ENCODE measurements at regions of chr4 and their contacts with region 1.

Region 1: GRCh38 chr4:113394730-113395530 is 345.5 kb downstream of the ANK2 start:
- DNase-seq: peak; percentile 82
- ATAC-seq: peak; percentile 97
- H3K4me3 ChIP-seq: no peak overlapping the region
- H3K27ac ChIP-seq: no peak overlapping the region
- H3K4me1 ChIP-seq: peaks cover 4 to 20% of the 10 kb centered on the region in 2 experiments; a peak in 2 of 4 replicates
- H3K27me3 ChIP-seq: no peaks in the 10 kb centered on the region
- CTCF ChIP-seq: peak; percentile 56 to 86 (median 79)
- POLR2A ChIP-seq: no peak
- RAD21 ChIP-seq: peak; percentile 97

Region 2: GRCh38 chr4:112726031-112726430 is 668.9 kb before region 1 on chr4:
- CTCF ChIA-PET with region 1: no interaction called
- POLR2A ChIA-PET with region 1: no interaction called
- RAD21 ChIA-PET with region 1: no interaction called
- intact Hi-C with region 1: no loop called
- DNase-seq: no peak
- ATAC-seq: no peak
- H3K4me3 ChIP-seq: no peak overlapping the region
- H3K27ac ChIP-seq: no peak overlapping the region
- H3K4me1 ChIP-seq: peaks cover 0 to 5% of the 10 kb centered on the region in 2 experiments; a peak in 1 of 4 replicates
- H3K27me3 ChIP-seq: no peaks in the 10 kb centered on the region
- CTCF ChIP-seq: no peak
- POLR2A ChIP-seq: no peak
- RAD21 ChIP-seq: no peak

Region 3: GRCh38 chr4:113547487-113548042 is 152.6 kb after region 1 on chr4:
- CTCF ChIA-PET with region 1: interaction called, 3 read pairs
- POLR2A ChIA-PET with region 1: no interaction called
- RAD21 ChIA-PET with region 1: interaction called in 1 of 2 experiments, 7 read pairs
- intact Hi-C with region 1: loop called (anchors 5 kb)
- DNase-seq: peak; percentile 95
- ATAC-seq: peak; percentile 100
- H3K4me3 ChIP-seq: no peak overlapping the region
- H3K27ac ChIP-seq: no peak overlapping the region
- H3K4me1 ChIP-seq: peaks cover 6 to 13% of the 10 kb centered on the region in 2 experiments; a peak in 3 of 4 replicates
- H3K27me3 ChIP-seq: no peaks in the 10 kb centered on the region
- CTCF ChIP-seq: peak; percentile 81 to 98 (median 96)
- POLR2A ChIP-seq: no peak
- RAD21 ChIP-seq: peak; percentile 85

Region 4: GRCh38 chr4:113849771-113850170 is 454.8 kb after region 1 on chr4:
- CTCF ChIA-PET with region 1: no interaction called
- POLR2A ChIA-PET with region 1: no interaction called
- RAD21 ChIA-PET with region 1: no interaction called
- intact Hi-C with region 1: no loop called
- DNase-seq: no peak
- ATAC-seq: no peak
- H3K4me3 ChIP-seq: no peak overlapping the region
- H3K27ac ChIP-seq: no peak overlapping the region
- H3K4me1 ChIP-seq: no peaks in the 10 kb centered on the region
- H3K27me3 ChIP-seq: no peaks in the 10 kb centered on the region
- CTCF ChIP-seq: no peak
- POLR2A ChIP-seq: no peak
- RAD21 ChIP-seq: no peak

Region 5: GRCh38 chr4:113893546-113893945 is 498.6 kb after region 1 on chr4:
- CTCF ChIA-PET with region 1: interaction called, 4 read pairs
- POLR2A ChIA-PET with region 1: no interaction called
- RAD21 ChIA-PET with region 1: interaction called in 1 of 2 experiments, 3 read pairs
- intact Hi-C with region 1: loop called (anchors 1 kb)
- DNase-seq: no peak
- ATAC-seq: no peak
- H3K4me3 ChIP-seq: no peak overlapping the region
- H3K27ac ChIP-seq: no peak overlapping the region
- H3K4me1 ChIP-seq: no peaks in the 10 kb centered on the region
- H3K27me3 ChIP-seq: no peaks in the 10 kb centered on the region
- CTCF ChIP-seq: peak; percentile 41 to 51 (median 44); a peak in 4 of 6 replicates
- POLR2A ChIP-seq: no peak
- RAD21 ChIP-seq: peak; percentile 40; the same call in 1 of the 2 replicates

Region 6: DNA sequence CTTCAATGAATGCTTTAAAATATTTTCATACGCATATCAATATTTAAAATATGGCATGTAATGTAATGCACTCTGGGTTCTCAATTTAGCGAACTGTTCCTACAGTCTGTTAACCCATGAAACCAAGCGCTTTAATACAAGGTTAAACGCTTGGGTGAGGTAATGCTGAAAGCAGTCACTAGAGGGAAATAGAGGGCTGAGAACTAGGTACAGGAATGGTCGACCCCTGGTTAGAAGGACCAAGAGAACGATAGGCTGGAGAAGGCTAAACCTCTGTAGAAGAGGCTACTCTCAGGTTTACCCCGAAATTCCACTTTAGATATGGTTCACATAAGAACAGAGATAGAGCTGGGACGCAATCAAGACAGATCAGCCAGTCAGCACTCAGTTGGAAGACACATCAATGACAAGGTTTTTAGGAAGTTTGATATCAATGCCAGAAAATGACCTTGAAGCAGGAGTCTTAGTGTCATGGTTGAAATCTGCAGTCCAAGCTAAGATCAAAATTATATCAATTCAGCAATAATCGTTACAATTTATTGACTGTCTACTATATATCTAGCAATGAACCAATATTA is 557.6 kb after region 1 on chr4:
- CTCF ChIA-PET with region 1: interaction called, 5 read pairs
- POLR2A ChIA-PET with region 1: no interaction called
- RAD21 ChIA-PET with region 1: no interaction called
- intact Hi-C with region 1: loop called (anchors 2 kb)
- DNase-seq: peak; percentile 64
- ATAC-seq: peak; percentile 95
- H3K4me3 ChIP-seq: no peak overlapping the region
- H3K27ac ChIP-seq: no peak overlapping the region
- H3K4me1 ChIP-seq: peaks cover under 1 to 15% of the 10 kb centered on the region in 2 experiments; a peak in 2 of 4 replicates
- H3K27me3 ChIP-seq: no peaks in the 10 kb centered on the region
- CTCF ChIP-seq: peak; percentile 79 to 89 (median 82)
- POLR2A ChIP-seq: no peak
- RAD21 ChIP-seq: peak; percentile 89

Region 7: DNA sequence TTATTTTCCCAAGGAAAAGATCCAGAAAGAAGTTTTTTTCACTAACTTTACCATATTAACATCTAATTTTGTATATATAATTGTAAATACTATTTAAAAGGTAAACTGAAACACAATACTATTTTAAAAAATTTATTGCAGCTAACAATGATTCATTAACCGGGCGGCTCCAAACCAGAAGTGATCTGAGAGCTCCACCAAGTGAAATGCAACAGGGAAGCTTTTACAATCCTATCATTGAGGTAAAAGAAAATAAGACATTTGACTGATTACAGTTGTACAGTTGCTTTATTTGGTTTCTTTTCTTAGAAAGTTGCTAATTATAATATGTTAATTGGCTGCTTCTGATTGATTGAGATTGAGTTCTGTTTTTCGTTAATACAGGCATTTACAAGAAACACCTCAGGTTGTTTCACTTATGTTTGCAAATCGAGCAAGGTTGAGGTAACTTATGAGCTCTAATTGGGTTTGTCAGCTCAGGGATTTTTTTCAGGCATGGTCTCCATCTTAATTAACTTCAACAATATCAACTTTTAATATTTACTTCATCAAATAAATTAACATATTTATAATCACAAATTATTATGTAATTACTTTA is 983.5 kb after region 1 on chr4:
- CTCF ChIA-PET with region 1: interaction called, 15 read pairs
- POLR2A ChIA-PET with region 1: no interaction called
- RAD21 ChIA-PET with region 1: no interaction called
- intact Hi-C with region 1: no loop called
- DNase-seq: no peak
- ATAC-seq: no peak
- H3K4me3 ChIP-seq: no peak overlapping the region
- H3K27ac ChIP-seq: no peak overlapping the region
- H3K4me1 ChIP-seq: peaks cover 0 to 1% of the 10 kb centered on the region in 2 experiments; a peak in 1 of 4 replicates
- H3K27me3 ChIP-seq: no peaks in the 10 kb centered on the region
- CTCF ChIP-seq: peak; percentile 18 to 64 (median 46); a peak in 3 of 6 replicates
- POLR2A ChIP-seq: no peak
- RAD21 ChIP-seq: peak; percentile 80